ENCODE measurements at regions of chrX and their contacts with region 1.

Region 1: DNA sequence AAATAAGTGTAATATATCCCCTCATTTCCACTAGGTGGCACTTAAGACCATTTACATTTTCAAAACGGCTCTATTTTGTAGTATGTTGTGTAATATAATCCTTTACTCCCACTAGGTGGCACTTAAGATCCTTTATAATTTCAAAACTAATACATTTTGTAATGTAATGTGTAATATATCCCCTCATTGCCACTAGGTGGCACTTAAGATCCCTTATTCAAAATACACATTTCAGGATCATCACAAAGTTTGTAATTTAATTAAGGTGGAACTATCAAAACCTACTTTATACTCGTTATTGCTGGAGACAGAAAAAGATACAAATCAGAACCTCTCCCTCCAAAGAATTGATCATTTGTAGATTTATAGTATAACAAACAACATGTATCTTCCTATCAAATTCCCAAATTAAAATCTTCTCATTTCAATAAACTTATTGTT is 132.5 kb downstream of the ARHGAP6 start:
- DNase-seq: no peak
- ATAC-seq: peak; percentile 88
- H3K4me3 ChIP-seq: no peak overlapping the region
- H3K27ac ChIP-seq: no peak overlapping the region
- H3K4me1 ChIP-seq: no peaks in the 10 kb centered on the region
- H3K27me3 ChIP-seq: no peaks in the 10 kb centered on the region
- CTCF ChIP-seq: peak; percentile 78

Region 2: GRCh38 chrX:11597479-11597878 is 64.2 kb after region 1 on chrX:
- intact Hi-C with region 1: no loop called
- DNase-seq: no peak
- ATAC-seq: no peak
- H3K4me3 ChIP-seq: no peak overlapping the region
- H3K27ac ChIP-seq: no peak overlapping the region
- H3K4me1 ChIP-seq: no peaks in the 10 kb centered on the region
- H3K27me3 ChIP-seq: no peaks in the 10 kb centered on the region
- CTCF ChIP-seq: no peak

Region 3: DNA sequence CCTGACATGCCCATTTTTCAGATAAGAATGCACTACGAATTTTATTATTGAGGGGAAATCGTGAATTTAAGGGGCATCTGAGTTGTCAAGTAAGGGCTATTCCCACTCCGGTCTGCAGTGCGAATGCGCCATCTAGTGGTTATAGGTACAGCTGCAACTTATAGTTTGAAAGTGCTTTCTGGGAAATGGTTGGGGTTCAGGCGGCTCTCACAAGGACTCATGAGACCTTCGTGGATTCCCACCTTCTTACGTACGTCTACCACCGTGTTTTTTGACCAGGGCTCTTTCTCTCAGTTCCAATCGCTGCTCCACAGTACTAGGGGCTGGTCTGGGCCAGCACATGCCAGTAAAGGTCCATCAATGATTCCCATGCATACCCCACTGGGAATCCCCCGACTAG is 237.1 kb after region 1 on chrX:
- intact Hi-C with region 1: loop called (anchors 10 kb)
- DNase-seq: no peak
- ATAC-seq: peak; percentile 85
- H3K4me3 ChIP-seq: no peak overlapping the region
- H3K27ac ChIP-seq: no peak overlapping the region
- H3K4me1 ChIP-seq: no peaks in the 10 kb centered on the region
- H3K27me3 ChIP-seq: no peaks in the 10 kb centered on the region
- CTCF ChIP-seq: peak; percentile 78